Aorta (tissue), 5 donors: ENCODE measurements at regions of chr7 and their contacts with region 1.

Region 1: DNA sequence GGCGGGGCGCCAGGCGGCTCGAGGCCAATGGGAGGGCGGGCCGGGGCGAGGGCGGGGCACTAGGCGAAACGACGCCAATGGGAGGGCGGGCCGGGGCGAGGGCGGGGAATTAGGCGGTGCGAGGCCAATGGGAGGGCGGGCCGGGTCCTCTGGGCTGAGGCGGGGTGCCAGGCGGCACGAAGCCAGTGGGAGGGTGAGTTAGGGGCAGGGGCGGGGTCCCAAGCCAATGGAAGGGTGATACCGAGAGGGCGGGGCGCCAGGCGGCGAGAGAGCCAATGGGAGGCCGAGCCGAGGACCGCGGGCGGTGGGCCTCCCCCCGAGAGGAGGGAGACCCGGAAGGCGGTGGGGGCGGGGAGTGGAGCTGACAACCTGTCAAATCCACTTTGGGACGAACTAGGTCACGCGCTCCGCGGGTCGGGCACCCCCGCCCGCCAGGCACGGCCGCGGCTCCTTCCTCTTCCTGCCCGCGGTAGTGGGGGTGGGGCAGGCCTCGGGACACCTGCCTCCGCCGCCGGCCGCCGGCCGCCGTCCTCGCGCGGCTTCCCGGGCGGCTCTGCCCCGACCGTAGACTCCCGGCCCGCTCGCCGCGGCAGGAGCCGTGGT is 28.0 kb upstream of the KMT2C start:
- DNase-seq: peak; percentile 100
- ATAC-seq: peak; percentile 99
- H3K4me3 ChIP-seq: peak overlapping the region; percentile 75 to 77
- H3K27ac ChIP-seq: peak overlapping the region; percentile 43 to 59
- H3K4me1 ChIP-seq: no peaks in the 10 kb centered on the region
- H3K27me3 ChIP-seq: no peaks in the 10 kb centered on the region

Region 2: DNA sequence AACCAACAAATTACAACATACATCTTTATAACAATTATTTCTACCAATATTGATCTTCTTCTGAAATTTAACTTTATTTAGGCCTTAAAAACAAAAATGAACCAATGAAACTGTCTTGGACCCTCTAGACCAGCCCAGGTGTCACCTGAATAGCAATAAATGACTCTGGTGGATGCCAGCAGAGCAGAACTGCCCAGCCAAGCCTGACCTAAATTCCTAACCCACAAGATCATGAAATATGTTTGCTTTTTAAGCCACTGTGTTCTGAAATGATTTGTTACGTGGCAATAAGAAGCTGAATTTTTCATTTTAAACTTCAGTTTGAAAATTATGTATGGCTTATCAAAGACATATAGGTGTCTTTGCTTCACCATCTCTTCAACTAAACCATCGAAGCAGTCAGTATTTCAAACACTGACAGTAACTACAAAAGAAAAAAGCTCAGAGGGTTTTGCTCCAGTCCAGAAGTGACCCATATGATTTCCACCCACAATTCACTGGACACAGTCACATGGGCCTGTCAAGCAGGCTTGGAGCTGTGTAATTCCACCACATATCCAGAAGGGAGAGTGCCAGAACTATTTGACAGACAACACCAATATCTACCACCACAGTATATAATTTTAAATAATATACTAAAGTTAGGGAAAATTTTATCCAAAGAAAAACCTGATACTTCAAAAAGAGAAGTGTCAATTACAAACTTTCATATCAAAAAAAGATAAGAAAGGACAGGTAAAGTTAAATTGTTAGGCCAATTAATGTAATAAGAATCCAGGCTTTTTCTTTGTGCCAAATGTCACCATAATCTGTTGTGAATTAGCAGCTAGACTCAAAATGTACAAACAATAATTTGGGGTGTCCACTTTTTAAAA is 122.5 kb before region 1 on chr7:
- intact Hi-C with region 1: loop called in 1 of 2 experiments (anchors 10 kb)
- DNase-seq: no peak
- ATAC-seq: peak; percentile 66
- H3K4me3 ChIP-seq: no peak overlapping the region
- H3K27ac ChIP-seq: no peak overlapping the region
- H3K4me1 ChIP-seq: peaks cover 1 to 3% of the 10 kb centered on the region in 2 donors
- H3K27me3 ChIP-seq: no peaks in the 10 kb centered on the region

Region 3: DNA sequence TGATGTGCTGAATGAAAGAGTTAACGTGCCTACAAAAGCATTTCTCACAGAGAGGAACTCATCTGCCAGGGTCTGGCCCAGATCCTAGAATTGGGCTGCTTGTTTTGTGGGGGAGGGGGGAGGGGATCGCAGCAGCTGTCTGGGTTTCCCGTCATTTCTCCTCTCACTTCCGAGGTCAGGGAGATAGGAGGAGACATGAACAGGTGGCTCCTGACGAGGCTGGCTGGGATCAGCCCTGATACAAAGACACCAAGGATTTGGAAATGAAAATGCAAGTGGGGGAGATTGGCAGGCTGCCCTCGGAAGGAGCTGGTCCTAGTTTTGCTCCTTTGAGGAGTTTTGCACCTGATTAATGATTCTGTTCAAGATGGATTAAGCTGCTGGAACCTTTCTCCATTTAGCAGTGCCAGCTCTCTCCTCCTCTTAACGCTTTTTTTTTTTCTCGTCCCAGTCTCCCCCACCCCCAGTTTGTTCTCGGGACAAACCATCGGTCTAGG is 58.8 kb after region 1 on chr7:
- intact Hi-C with region 1: no loop called
- DNase-seq: no peak
- ATAC-seq: no peak
- H3K4me3 ChIP-seq: no peak overlapping the region
- H3K27ac ChIP-seq: no peak overlapping the region
- H3K4me1 ChIP-seq: no peaks in the 10 kb centered on the region
- H3K27me3 ChIP-seq: no peaks in the 10 kb centered on the region

Region 4: DNA sequence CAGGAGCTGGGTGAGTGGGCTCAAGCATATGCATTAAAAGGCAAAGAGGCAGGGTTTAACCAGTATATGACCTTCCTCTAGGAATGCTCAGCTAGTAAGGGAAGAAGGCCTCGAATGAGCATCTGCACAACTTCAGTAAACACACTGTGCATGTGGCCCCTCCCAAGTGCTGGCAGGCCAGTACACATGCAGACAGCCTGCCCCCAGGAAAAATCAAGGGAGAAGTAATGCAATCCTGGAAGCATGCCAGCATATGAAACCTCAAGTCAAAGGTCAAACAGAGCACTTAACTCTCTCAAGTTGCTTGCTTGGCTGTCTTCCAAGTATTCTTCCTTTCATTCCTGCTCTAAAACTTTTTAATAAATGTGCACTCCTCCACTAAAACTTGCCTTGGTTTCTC is 504.1 kb after region 1 on chr7:
- intact Hi-C with region 1: no loop called
- DNase-seq: no peak
- ATAC-seq: no peak
- H3K4me3 ChIP-seq: no peak overlapping the region
- H3K27ac ChIP-seq: no peak overlapping the region
- H3K4me1 ChIP-seq: no peaks in the 10 kb centered on the region
- H3K27me3 ChIP-seq: no peaks in the 10 kb centered on the region